ENCODE measurements at regions of chr7 and their contacts with region 1.

Region 1: DNA sequence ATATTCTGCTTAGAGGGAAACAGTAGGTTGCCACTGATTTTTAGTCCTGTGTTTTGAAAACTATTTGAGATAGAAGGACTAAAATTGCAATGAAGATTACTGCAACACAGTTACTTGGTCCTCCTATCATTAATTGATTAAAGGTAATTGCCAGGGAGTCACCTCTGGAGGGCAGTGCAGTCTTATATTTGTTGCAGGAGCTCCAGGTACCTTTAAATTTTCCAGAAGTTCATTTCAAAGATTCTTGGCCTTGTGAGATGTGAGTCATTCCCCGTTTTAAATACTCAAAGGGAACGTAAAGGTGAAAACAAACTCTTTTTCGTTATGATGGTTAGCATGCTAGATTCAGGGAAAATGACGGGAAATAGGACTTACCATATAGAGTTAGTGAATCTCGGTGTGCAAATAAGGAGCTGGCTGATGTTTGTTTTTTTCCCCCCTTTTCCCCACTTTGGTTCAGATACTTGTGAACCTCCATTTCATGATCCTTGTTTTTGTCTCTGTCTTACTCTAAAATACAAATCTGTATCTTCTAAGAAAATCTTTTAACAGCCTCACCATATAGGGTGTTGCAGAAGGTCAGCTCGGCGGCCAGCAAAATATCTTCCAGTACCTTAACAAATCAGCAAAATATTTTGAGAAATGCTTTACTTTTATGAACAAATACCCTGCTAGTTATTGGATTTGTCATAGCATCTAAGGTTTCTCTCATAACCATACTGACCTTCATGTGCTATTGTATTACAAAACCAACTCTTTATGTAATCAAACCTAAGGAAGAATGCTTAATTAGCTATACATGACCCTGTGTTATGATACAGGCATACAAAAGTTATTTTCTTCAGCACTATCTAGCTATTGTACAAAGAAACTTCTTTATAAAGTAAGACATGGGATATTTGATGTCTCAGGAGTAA is 143.0 kb upstream of the HDAC9 start:
- DNase-seq: peak; percentile 83
- ATAC-seq: peak; percentile 86
- H3K4me3 ChIP-seq: peak overlapping the region; percentile 39
- H3K27ac ChIP-seq: peak overlapping the region; percentile 8; the same call in 1 of the 2 replicates
- H3K4me1 ChIP-seq: peaks cover 14% of the 10 kb centered on the region
- H3K27me3 ChIP-seq: no peaks in the 10 kb centered on the region
- CTCF ChIP-seq: peak; percentile 87

Region 2: GRCh38 chr7:18408461-18408860 is 55.9 kb after region 1 on chr7:
- CTCF ChIA-PET with region 1: no interaction called
- POLR2A ChIA-PET with region 1: no interaction called
- intact Hi-C with region 1: loop called (anchors 2 kb)
- DNase-seq: peak; percentile 86
- ATAC-seq: peak; percentile 98
- H3K4me3 ChIP-seq: no peak overlapping the region
- H3K27ac ChIP-seq: peak overlapping the region; percentile 49
- H3K4me1 ChIP-seq: peaks cover 27% of the 10 kb centered on the region
- H3K27me3 ChIP-seq: no peaks in the 10 kb centered on the region
- CTCF ChIP-seq: no peak

Region 3: GRCh38 chr7:18508443-18509427 is 156.1 kb after region 1 on chr7:
- CTCF ChIA-PET with region 1: interaction called, 5 read pairs
- POLR2A ChIA-PET with region 1: interaction called, 4 read pairs
- intact Hi-C with region 1: loop called (anchors 2 kb)
- DNase-seq: peak; percentile 92
- ATAC-seq: peak; percentile 92
- H3K4me3 ChIP-seq: peak overlapping the region; percentile 73
- H3K27ac ChIP-seq: peak overlapping the region; percentile 99
- H3K4me1 ChIP-seq: peaks cover 38% of the 10 kb centered on the region
- H3K27me3 ChIP-seq: no peaks in the 10 kb centered on the region
- CTCF ChIP-seq: no peak

Region 4: DNA sequence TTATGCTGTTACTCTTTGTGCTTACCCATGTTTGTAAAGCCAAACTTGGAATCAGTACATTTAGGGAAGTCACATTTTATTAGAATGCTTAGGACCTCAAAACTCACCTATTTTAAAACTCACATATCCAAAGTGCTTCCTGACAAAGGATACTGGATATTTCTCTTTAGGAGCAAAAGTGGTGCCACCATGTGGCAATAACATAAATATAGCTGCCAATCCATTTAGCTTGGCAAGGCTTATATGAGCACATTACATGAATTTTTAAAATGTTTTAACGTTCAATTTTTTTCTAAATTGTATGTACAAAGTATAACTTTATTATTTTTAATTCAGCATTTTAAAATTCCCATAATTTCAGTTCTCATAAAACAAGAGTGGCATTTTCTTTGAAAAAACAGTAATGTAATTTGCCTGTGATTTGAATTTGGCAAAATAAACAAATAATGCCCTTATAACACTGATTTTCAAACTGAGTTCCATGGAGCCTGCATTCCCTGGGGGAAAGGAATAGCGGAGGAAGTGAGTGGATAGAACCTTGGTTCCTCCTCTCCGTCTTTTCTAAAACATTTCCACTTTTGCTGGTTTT is 218.4 kb after region 1 on chr7:
- CTCF ChIA-PET with region 1: interaction called, 12 read pairs
- POLR2A ChIA-PET with region 1: no interaction called
- intact Hi-C with region 1: loop called (anchors 1 kb)
- DNase-seq: peak; percentile 78
- ATAC-seq: peak; percentile 84
- H3K4me3 ChIP-seq: no peak overlapping the region
- H3K27ac ChIP-seq: no peak overlapping the region
- H3K4me1 ChIP-seq: peaks cover 14% of the 10 kb centered on the region; the same call in 1 of the 2 replicates
- H3K27me3 ChIP-seq: no peaks in the 10 kb centered on the region
- CTCF ChIP-seq: peak; percentile 76

Region 5: DNA sequence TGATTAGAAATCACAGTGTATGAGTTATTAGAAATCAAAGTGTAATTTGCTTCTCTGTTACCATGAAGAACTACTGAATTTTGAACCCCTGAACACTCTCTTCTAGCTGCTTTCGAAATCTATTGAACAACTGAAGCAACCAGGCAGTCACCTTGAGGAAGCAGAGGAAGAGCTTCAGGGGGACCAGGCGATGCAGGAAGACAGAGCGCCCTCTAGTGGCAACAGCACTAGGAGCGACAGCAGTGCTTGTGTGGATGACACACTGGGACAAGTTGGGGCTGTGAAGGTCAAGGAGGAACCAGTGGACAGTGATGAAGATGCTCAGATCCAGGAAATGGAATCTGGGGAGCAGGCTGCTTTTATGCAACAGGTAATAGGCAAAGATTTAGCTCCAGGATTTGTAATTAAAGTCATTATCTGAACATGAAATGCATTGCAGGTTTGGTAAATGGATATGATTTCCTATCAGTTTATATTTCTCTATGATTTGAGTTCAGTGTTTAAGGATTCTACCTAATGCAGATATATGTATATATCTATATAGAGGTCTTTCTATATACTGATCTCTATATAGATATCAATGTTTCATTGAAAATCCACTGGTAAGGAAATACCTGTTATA is 313.6 kb after region 1 on chr7:
- CTCF ChIA-PET with region 1: interaction called, 4 read pairs
- POLR2A ChIA-PET with region 1: no interaction called
- intact Hi-C with region 1: loop called (anchors 1 kb)
- DNase-seq: peak; percentile 81
- ATAC-seq: peak; percentile 70
- H3K4me3 ChIP-seq: no peak overlapping the region
- H3K27ac ChIP-seq: no peak overlapping the region
- H3K4me1 ChIP-seq: peaks cover 25% of the 10 kb centered on the region
- H3K27me3 ChIP-seq: no peaks in the 10 kb centered on the region
- CTCF ChIP-seq: peak; percentile 97

Region 6: GRCh38 chr7:18978108-18978495 is 625.5 kb after region 1 on chr7:
- CTCF ChIA-PET with region 1: no interaction called
- POLR2A ChIA-PET with region 1: no interaction called
- intact Hi-C with region 1: loop called (anchors 5 kb)
- DNase-seq: peak; percentile 94
- ATAC-seq: peak; percentile 61
- H3K4me3 ChIP-seq: peak overlapping the region; percentile 54
- H3K27ac ChIP-seq: peak overlapping the region; percentile 97
- H3K4me1 ChIP-seq: peaks cover 50% of the 10 kb centered on the region
- H3K27me3 ChIP-seq: no peaks in the 10 kb centered on the region
- CTCF ChIP-seq: no peak

Region 7: DNA sequence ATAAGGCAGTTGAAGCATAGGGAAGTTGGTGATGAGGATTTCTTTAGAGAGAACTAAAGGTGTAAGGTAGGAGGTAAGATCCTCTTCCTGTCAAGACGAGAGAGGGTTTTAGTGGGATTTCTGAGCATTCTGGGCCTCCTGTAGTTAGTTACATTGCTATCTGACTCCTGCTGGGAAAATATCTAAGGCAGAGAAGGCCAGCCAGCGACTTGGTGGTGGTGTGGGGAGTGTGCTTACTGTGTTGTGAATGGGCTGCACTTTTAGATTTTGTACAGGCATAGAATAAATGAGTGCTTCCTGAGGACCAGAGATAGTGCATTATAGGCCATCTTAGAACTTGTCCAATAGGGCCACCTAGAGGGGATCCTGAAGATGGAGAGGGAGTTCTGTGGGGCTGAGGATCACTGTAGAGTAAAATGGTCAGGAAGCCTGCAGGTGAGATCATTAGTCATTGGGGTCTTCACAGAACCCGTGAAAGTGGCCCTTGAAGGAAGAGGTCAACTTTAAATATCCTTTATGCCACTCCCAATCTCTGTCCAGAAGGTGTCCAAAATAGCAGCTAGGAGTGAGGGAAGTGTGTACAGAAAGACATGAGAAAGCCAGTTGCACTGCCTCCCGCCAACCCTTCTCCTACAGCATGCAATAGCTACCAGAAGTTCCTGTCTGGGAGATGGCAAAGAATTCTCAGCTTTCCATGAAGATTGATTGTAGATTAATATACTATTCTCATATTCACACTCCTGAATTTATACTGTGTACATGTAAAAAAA is 1089.6 kb after region 1 on chr7:
- CTCF ChIA-PET with region 1: no interaction called
- POLR2A ChIA-PET with region 1: no interaction called
- intact Hi-C with region 1: loop called (anchors 1 kb)
- DNase-seq: peak; percentile 64
- ATAC-seq: peak; percentile 100
- H3K4me3 ChIP-seq: no peak overlapping the region
- H3K27ac ChIP-seq: no peak overlapping the region
- H3K4me1 ChIP-seq: no peaks in the 10 kb centered on the region
- H3K27me3 ChIP-seq: no peaks in the 10 kb centered on the region
- CTCF ChIP-seq: peak; percentile 80

Measured in PC-3 (cell line).